MCF 10A (cell line): ENCODE measurements at regions of chr6 and their contacts with region 1.

Region 1: DNA sequence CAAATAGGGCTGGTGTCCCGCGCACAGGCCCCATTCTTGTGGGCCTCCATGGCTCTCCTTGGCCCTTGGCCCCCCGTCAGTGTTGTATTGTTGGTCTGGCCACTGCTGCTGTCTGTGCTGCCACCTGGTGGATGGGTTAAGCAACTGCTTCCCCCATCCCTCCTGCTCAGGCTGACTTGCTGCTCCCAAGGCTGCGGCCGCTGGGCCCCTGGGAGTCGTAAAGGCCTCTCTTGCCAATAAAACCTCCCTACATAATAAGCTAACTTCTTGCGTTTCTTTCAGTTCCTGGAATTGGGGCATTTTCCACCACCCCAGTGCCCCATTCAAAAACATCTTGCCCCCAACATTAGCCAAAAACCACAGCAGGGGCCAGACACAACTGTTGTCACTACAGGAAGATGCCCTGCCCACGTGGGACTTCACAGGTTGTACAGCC is 27.1 kb downstream of the CD83 start:
- DNase-seq: peak; percentile 75
- H3K4me3 Mint-ChIP-seq: no peak overlapping the region
- H3K27ac Mint-ChIP-seq: no peak overlapping the region
- H3K4me1 Mint-ChIP-seq: no peaks in the 10 kb centered on the region
- H3K27me3 Mint-ChIP-seq: no peaks in the 10 kb centered on the region
- CTCF ChIP-seq: peak; percentile 92

Region 2: DNA sequence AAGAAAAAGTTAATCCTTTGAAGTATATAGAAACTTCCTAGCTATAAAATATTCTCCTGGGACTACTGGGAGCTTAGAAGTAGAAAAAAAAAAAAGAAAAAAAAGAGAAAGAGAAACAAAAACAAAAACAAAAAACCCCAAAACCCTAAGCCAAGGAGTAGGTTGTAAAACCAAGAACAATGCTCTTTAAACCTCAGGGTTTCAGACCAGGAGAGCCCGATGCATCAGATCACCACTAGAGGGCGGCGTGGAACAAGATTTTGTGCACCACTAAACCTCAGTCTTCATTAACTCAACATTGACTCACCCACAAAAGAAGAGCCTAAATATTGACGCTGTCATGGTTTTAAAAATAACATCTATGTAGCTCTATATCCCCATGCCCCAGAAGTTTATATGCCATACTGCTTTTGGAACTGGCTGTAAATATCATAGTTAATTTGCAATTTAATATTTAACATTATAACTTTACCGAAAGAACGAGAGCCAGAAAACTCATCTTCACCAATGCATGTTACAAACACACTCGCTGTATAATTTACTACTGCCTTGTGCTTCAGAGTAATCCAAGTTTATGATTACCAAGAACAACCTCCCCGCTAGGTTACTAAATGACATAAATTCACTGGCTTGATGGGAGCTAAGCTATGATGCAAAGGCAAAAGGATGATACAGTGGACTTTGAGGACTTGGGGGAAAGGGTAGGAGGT is 349.5 kb before region 1 on chr6:
- CTCF ChIA-PET with region 1: interaction called, 7 read pairs
- POLR2A ChIA-PET with region 1: no interaction called
- intact Hi-C with region 1: loop called (anchors 2 kb)
- DNase-seq: peak; percentile 87
- H3K4me3 Mint-ChIP-seq: no peak overlapping the region
- H3K27ac Mint-ChIP-seq: no peak overlapping the region
- H3K4me1 Mint-ChIP-seq: peaks cover 5% of the 10 kb centered on the region
- H3K27me3 Mint-ChIP-seq: no peaks in the 10 kb centered on the region
- CTCF ChIP-seq: peak; percentile 83

Region 3: GRCh38 chr6:13903364-13903763 is 241.3 kb before region 1 on chr6:
- CTCF ChIA-PET with region 1: interaction called, 70 read pairs
- POLR2A ChIA-PET with region 1: no interaction called
- intact Hi-C with region 1: no loop called
- DNase-seq: no peak
- H3K4me3 Mint-ChIP-seq: no peak overlapping the region
- H3K27ac Mint-ChIP-seq: no peak overlapping the region
- H3K4me1 Mint-ChIP-seq: no peaks in the 10 kb centered on the region
- H3K27me3 Mint-ChIP-seq: peaks cover 56% of the 10 kb centered on the region
- CTCF ChIP-seq: no peak

Region 4: DNA sequence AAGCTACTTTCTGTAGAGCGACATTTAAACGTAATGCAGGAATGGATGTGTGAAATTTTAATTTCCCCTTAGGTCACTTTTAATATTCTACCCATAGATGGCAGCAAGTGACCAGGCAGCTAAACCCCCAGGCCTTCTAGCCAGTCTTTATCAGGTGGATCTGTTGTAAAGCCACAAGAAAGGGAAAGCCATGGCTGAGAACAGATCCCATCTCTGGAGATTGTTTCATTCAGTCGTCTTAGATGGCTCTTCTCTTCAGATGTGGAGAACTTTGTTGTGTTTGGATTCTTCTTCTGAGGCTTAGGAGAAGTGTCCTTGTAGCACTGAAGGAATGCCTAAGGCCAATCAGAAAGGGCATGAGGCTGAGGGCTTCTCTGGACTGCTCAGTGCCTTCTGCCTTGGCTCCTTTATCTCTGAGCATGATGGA is 235.7 kb before region 1 on chr6:
- CTCF ChIA-PET with region 1: interaction called, 70 read pairs
- POLR2A ChIA-PET with region 1: no interaction called
- intact Hi-C with region 1: loop called (anchors 1 kb)
- DNase-seq: peak; percentile 74
- H3K4me3 Mint-ChIP-seq: no peak overlapping the region
- H3K27ac Mint-ChIP-seq: no peak overlapping the region
- H3K4me1 Mint-ChIP-seq: peaks cover 8% of the 10 kb centered on the region
- H3K27me3 Mint-ChIP-seq: peaks cover 28% of the 10 kb centered on the region
- CTCF ChIP-seq: peak; percentile 74

Region 5: DNA sequence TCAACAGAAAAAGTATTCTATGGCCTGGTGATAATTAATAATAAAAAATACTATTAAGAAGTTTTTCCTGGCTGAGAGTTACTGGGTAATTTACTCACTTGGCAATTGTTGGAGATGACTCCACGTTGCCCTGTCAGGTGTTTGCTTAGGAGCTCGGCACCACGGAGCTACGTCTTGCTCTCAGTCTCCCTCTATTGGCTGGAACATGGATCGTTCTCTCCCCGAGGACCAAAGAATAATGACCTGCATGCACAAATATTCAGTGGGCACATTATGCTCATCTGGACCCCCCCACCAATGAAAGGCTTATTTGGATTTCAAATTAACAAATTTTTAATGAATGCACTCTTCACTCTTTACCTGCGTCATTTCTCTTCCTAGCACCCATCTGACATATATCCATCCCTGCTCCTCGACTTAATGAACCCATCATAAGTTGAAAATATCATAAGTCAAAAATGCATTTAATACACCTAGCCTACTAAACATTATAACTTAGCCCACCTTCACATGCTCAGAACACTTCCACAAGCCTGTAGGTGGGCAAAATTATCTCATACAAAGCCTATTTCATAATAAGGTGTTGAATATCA is 98.1 kb before region 1 on chr6:
- CTCF ChIA-PET with region 1: interaction called, 4 read pairs
- POLR2A ChIA-PET with region 1: no interaction called
- intact Hi-C with region 1: loop called (anchors 1 kb)
- DNase-seq: peak; percentile 62
- H3K4me3 Mint-ChIP-seq: no peak overlapping the region
- H3K27ac Mint-ChIP-seq: no peak overlapping the region
- H3K4me1 Mint-ChIP-seq: no peaks in the 10 kb centered on the region
- H3K27me3 Mint-ChIP-seq: peaks cover 32% of the 10 kb centered on the region
- CTCF ChIP-seq: peak; percentile 67

Region 6: DNA sequence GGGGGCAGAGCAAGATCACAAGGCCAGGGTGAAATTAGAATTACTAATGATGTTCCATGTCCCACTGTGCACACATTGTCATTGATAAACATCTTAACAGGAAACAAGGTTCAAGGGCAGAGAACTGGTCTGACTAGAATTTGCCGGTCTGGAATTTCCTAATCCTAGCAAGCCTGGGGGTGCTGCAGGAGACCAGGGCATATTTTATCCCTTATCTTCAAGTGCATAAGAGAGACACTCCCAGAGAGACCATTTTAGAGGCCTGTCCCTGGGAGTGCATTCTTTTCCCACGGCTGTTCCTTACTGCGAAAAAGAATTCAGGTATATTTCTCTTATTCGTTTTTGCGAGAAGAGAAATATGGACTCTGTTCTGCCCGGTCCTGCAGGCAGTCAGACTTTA is 14.4 kb after region 1 on chr6:
- CTCF ChIA-PET with region 1: interaction called, 15 read pairs
- POLR2A ChIA-PET with region 1: no interaction called
- intact Hi-C with region 1: no loop called
- DNase-seq: no peak
- H3K4me3 Mint-ChIP-seq: no peak overlapping the region
- H3K27ac Mint-ChIP-seq: no peak overlapping the region
- H3K4me1 Mint-ChIP-seq: no peaks in the 10 kb centered on the region
- H3K27me3 Mint-ChIP-seq: peaks cover 17% of the 10 kb centered on the region
- CTCF ChIP-seq: no peak

Region 7: GRCh38 chr6:14559754-14560536 is 415.2 kb after region 1 on chr6:
- CTCF ChIA-PET with region 1: no interaction called
- POLR2A ChIA-PET with region 1: no interaction called
- intact Hi-C with region 1: no loop called
- DNase-seq: no peak
- H3K4me3 Mint-ChIP-seq: no peak overlapping the region
- H3K27ac Mint-ChIP-seq: no peak overlapping the region
- H3K4me1 Mint-ChIP-seq: no peaks in the 10 kb centered on the region
- H3K27me3 Mint-ChIP-seq: no peaks in the 10 kb centered on the region
- CTCF ChIP-seq: no peak